ENCODE measurements at regions of chr3 and their contacts with region 1.

Region 1: DNA sequence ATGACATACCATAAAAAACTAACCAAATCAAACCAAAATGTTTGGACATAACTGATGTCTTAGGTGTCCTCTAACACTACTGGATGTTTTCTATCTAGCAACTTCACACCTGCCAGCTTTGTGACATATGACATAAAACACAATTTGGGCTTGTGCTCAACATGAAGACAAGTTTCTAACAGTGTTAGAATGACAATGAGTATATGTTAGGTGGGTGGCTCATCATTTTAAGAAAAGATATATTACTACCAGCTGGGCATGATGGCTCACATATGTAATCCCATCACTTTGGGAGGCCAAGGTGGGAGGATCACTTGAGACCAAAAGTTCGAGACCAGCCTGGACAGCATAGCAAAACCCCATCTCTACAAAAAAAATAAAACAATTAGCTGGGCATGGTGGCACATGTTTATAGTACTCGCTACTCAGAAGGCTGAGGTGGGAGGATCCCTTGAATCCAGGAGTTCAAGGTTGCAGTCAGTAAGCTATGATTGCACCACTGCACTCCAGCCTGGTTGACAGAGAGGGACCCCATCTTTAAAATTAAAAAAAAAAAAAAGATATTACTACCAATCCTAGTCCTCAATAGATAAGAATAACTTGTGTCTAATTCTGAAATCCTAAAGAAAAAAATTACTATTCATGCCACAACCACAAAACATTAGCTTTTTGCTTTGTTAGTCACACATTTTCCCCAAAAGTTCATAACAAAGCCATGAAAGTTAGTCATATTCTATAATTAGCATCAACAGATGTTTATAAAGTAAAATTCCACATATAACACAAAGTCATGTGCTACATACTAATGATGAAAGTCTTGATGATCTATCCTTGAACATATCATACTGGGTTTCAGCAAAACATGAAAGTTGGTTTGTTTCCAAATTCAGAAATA is 59.9 kb downstream of the LRRFIP2 start:
- DNase-seq: no peak
- ATAC-seq: no peak
- H3K4me3 ChIP-seq: no peak overlapping the region
- H3K27ac ChIP-seq: peak overlapping the region; percentile 79 to 89
- H3K4me1 ChIP-seq: peaks cover 5 to 6% of the 10 kb centered on the region in 2 donors
- H3K27me3 ChIP-seq: no peaks in the 10 kb centered on the region

Region 2: GRCh38 chr3:37054370-37054769 is 60.1 kb before region 1 on chr3:
- intact Hi-C with region 1: loop called in 1 of 2 experiments (anchors 5 kb)
- DNase-seq: no peak
- ATAC-seq: peak; percentile 91
- H3K4me3 ChIP-seq: no peak overlapping the region
- H3K27ac ChIP-seq: peak overlapping the region in 1 of 2 donors; percentile 94
- H3K4me1 ChIP-seq: peaks cover 0 to 6% of the 10 kb centered on the region in 2 donors
- H3K27me3 ChIP-seq: no peaks in the 10 kb centered on the region

Region 3: DNA sequence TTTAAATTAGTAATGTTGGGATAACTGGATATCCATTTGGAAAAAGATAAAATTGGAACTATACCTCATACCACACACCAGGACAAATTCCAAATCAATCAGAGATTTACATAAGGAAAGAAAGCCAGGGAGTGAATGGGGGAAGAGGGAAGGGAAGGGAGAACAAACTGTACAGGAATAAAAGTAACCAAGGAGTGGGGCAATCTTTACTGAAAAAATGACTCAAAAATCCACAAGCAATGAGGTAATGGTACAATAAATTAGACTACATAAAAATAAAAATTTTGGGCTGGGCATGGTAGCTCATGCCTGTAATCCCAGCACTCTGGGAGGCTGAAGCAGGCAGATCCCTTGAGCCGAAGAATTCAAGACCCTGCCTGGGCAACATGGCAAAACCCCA is 38.5 kb before region 1 on chr3:
- intact Hi-C with region 1: loop called in 1 of 2 experiments (anchors 5 kb)
- DNase-seq: no peak
- ATAC-seq: no peak
- H3K4me3 ChIP-seq: no peak overlapping the region
- H3K27ac ChIP-seq: peak overlapping the region in 1 of 2 donors; percentile 15
- H3K4me1 ChIP-seq: no peaks in the 10 kb centered on the region
- H3K27me3 ChIP-seq: no peaks in the 10 kb centered on the region

Measured in aorta (tissue), 5 donors.